ENCODE measurements at regions of chr5 and their contacts with region 1.

Region 1: DNA sequence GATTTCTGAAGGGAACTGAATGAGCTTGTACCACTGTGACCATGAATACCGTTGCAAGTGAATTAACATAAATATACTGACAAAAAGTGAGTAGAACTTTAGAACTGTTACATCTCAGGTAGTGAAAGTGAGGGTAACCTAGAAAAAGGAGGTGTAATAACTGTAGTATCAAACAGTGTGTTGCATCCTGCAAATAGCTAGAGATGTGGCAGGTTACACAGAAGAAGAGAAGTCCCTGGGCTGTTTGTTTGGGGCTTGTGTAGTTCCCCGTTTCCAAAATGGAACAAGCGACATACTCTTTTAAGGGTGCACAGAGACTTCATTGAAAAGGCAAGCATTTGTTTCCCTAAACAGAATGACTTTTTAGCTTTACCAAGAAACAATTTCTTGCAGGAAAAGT is 214.8 kb downstream of the NR3C1 start:
- DNase-seq: no peak
- H3K4me3 Mint-ChIP-seq: peak overlapping the region; percentile 34
- H3K27ac Mint-ChIP-seq: peak overlapping the region; percentile 71
- H3K4me1 Mint-ChIP-seq: peaks cover 54% of the 10 kb centered on the region
- H3K27me3 Mint-ChIP-seq: no peaks in the 10 kb centered on the region

Region 2: GRCh38 chr5:143217065-143217803 is 28.5 kb after region 1 on chr5:
- intact Hi-C with region 1: loop called (anchors 1 kb)
- DNase-seq: no peak
- H3K4me3 Mint-ChIP-seq: no peak overlapping the region
- H3K27ac Mint-ChIP-seq: peak overlapping the region; percentile 85
- H3K4me1 Mint-ChIP-seq: peaks cover 85% of the 10 kb centered on the region
- H3K27me3 Mint-ChIP-seq: no peaks in the 10 kb centered on the region

Region 3: DNA sequence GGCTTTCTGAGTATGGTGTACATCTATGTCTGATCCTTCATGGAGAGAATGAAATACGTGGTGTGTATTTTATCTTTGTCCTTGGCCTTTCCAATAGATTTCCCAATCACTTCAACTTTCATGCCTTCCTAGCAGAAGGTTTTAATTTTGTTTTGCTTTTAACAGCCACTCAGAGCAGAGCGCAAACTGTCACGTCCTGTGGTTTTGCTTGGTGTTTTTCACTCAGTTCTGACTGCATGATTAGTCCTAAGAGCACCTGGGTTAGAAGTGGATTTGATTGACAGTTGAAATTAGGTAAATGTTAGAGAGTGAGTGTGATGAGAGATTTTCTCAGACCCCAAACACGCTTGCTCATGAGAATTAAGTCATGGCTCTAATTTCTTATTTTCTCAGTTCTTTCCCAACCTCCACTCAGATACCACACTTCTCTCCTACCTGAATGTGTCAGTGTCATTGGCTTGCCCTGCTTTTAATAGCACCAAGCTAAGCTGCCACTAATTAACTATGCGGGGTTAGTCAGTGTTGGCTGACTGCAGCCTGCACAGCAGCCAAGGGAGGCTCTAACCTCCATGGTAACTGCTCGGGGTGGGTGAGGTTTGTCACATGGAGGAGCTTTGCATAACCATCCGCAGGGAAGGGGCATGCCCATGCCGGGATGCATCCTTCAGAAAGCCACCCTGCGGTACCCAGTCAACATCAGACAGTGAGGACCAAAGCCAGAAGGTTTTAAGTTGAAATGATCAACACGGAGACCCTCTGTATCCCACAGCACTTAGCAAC is 41.4 kb after region 1 on chr5:
- intact Hi-C with region 1: loop called (anchors 1 kb)
- DNase-seq: peak; percentile 45
- H3K4me3 Mint-ChIP-seq: peak overlapping the region; percentile 43
- H3K27ac Mint-ChIP-seq: peak overlapping the region; percentile 87
- H3K4me1 Mint-ChIP-seq: peaks cover 41% of the 10 kb centered on the region
- H3K27me3 Mint-ChIP-seq: no peaks in the 10 kb centered on the region

Measured in activated T-helper 1 cell treated with anti-CD3 and anti-CD28 coated beads, Interleukin-12 subunit alpha, Interleukin-12 subunit beta, Interleukin-2, Interleukin-4 antibody, amounts not matched to agents 30 ng/mL and 10 ng/mL and 1 ng/mL, durations not matched to agents 14 hours and 24 hours and 36 hours (primary cell).